Natural killer cell (primary cell): ENCODE measurements at regions of chr14 and their contacts with region 1.

Region 1: DNA sequence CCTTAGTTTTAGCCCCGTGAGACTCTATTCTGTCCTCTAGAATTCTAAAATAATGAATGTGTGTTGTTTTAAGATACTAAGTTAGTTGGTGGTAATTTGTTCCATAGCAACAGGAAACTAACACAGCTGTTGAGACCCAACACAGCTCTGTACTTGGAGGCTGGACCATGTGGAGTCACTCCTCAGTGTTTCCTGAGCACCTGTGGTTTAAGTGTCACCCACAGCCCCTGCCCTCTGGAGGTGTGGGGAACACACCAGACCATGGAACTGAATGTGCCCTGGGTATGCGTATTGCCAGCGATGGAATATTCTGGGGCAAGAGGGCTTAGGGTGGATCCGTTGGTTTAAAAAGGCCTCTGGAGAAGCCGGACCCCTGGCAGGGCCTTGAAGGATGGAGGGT is 16.6 kb upstream of the GPR68 start:
- DNase-seq: peak; percentile 62 to 73
- ATAC-seq: peak; percentile 79 to 87 (median 84)
- H3K4me3 ChIP-seq: no peak overlapping the region
- H3K4me3 Mint-ChIP-seq: peak overlapping the region; percentile 43
- H3K27ac ChIP-seq: peak overlapping the region; percentile 82
- H3K27ac Mint-ChIP-seq: peak overlapping the region; percentile 73 to 88
- H3K4me1 ChIP-seq: peaks cover 46% of the 10 kb centered on the region
- H3K4me1 Mint-ChIP-seq: peaks cover 52 to 74% of the 10 kb centered on the region in 2 donors
- H3K27me3 ChIP-seq: no peaks in the 10 kb centered on the region
- H3K27me3 Mint-ChIP-seq: no peaks in the 10 kb centered on the region
- CTCF ChIP-seq: no peak

Region 2: GRCh38 chr14:91177073-91178034 is 83.8 kb before region 1 on chr14:
- intact Hi-C with region 1: no loop called
- DNase-seq: peak; percentile 54 to 90
- ATAC-seq: peak; percentile 87 to 94 (median 90)
- H3K4me3 ChIP-seq: no peak overlapping the region
- H3K4me3 Mint-ChIP-seq: no peak overlapping the region
- H3K27ac ChIP-seq: peak overlapping the region; percentile 63
- H3K27ac Mint-ChIP-seq: peak overlapping the region; percentile 76 to 85
- H3K4me1 ChIP-seq: peaks cover 14% of the 10 kb centered on the region
- H3K4me1 Mint-ChIP-seq: peaks cover 12 to 20% of the 10 kb centered on the region in 2 donors
- H3K27me3 ChIP-seq: no peaks in the 10 kb centered on the region
- H3K27me3 Mint-ChIP-seq: no peaks in the 10 kb centered on the region
- CTCF ChIP-seq: peak; percentile 90

Region 3: DNA sequence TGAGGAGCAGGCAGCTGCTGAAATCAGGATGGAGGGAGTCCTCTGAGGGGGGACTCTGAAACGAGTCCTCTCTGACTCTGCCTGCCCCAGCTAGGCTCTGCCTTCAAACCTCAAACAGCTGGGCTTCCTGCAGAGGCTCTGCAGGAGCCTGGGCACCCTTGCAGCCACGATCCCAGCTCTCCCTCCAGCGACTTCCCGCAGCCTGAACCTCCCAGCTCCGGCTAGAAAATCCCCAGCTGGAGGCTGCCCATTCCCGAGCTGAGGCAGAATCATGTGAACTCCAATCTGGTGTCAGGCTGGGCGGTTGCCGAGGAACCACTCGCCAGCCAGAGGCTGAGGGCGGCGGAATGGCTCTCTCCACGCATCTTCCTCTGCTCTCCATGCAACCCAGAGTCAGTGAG is 16.6 kb before region 1 on chr14 and contains the start of gene GPR68:
- intact Hi-C with region 1: loop called (anchors 1 kb)
- DNase-seq: peak in 1 of 2 donors; percentile 68
- ATAC-seq: no peak
- H3K4me3 ChIP-seq: peak within 1 kb of the TSS; percentile 70
- H3K4me3 Mint-ChIP-seq: peak within 1 kb of the TSS; percentile 88
- H3K27ac ChIP-seq: peak within 1 kb of the TSS; percentile 92
- H3K27ac Mint-ChIP-seq: peak within 1 kb of the TSS; percentile 86 to 90
- H3K4me1 ChIP-seq: peaks cover 93% of the 10 kb centered on the region
- H3K4me1 Mint-ChIP-seq: peaks cover 75 to 77% of the 10 kb centered on the region in 2 donors
- H3K27me3 ChIP-seq: no peaks in the 10 kb centered on the region
- H3K27me3 Mint-ChIP-seq: no peaks in the 10 kb centered on the region
- CTCF ChIP-seq: no peak
- total RNA-seq, gene GPR68: 7.6 to 24.0 (median 15.7) TPM